ENCODE measurements at regions of chr2 and their contacts with region 1.

Region 1: DNA sequence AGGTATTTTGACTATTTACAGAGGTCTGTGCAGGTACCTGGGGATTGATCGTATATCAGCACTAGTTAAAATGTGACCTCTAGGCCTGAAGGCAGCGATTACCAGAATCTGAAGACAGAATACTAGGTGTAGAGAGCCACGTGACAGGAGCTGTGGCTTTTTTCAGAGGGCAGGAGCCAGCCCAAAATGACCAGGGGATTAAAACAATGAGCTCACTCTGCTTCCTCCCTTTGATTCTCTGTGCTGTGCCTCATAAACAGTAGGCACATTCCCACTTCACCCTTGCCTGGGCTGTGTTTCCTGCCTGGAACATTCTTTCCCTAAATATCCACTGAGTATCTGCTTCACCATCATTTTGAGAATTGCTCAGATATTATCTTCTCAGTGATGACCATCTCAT is 15.2 kb downstream of the ITGAV start:
- DNase-seq: no peak
- H3K4me3 ChIP-seq: no peak overlapping the region
- H3K4me3 Mint-ChIP-seq: no peak overlapping the region
- H3K27ac ChIP-seq: no peak overlapping the region
- H3K27ac Mint-ChIP-seq: no peak overlapping the region
- H3K4me1 ChIP-seq: no peaks in the 10 kb centered on the region
- H3K4me1 Mint-ChIP-seq: no peaks in the 10 kb centered on the region
- H3K27me3 ChIP-seq: no peaks in the 10 kb centered on the region
- H3K27me3 Mint-ChIP-seq: no peaks in the 10 kb centered on the region
- CTCF ChIP-seq: no peak

Region 2: DNA sequence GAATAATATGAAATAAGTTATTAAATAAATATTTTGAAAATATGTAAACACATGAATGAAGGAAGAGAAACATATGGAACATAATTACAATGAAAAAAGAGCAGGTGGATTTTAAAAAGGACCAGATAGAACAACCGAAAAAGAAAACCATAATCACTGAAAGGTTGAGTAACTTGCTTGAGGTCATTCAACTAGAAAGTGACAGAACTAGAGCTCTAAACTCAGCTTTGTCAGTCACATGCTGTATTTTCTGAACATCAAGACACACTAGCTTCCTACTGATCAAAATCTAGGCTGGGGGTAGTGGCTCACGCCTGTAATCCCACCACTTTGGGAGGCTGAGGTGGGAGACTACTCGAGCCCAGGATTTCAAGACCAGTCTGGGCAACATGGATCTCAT is 45.2 kb before region 1 on chr2:
- intact Hi-C with region 1: loop called in 1 of 2 experiments (anchors 10 kb)
- DNase-seq: no peak
- H3K4me3 ChIP-seq: no peak overlapping the region
- H3K4me3 Mint-ChIP-seq: no peak overlapping the region
- H3K27ac ChIP-seq: no peak overlapping the region
- H3K27ac Mint-ChIP-seq: no peak overlapping the region
- H3K4me1 ChIP-seq: no peaks in the 10 kb centered on the region
- H3K4me1 Mint-ChIP-seq: no peaks in the 10 kb centered on the region
- H3K27me3 ChIP-seq: no peaks in the 10 kb centered on the region
- H3K27me3 Mint-ChIP-seq: peaks cover 0 to 3% (median 0%) of the 10 kb centered on the region in 3 donors
- CTCF ChIP-seq: no peak

Region 3: GRCh38 chr2:186570587-186570986 is 34.5 kb before region 1 on chr2:
- intact Hi-C with region 1: no loop called
- DNase-seq: no peak
- H3K4me3 ChIP-seq: no peak overlapping the region
- H3K4me3 Mint-ChIP-seq: no peak overlapping the region
- H3K27ac ChIP-seq: no peak overlapping the region
- H3K27ac Mint-ChIP-seq: no peak overlapping the region
- H3K4me1 ChIP-seq: no peaks in the 10 kb centered on the region
- H3K4me1 Mint-ChIP-seq: peaks cover 6% of the 10 kb centered on the region
- H3K27me3 ChIP-seq: no peaks in the 10 kb centered on the region
- H3K27me3 Mint-ChIP-seq: no peaks in the 10 kb centered on the region
- CTCF ChIP-seq: no peak

Region 4: DNA sequence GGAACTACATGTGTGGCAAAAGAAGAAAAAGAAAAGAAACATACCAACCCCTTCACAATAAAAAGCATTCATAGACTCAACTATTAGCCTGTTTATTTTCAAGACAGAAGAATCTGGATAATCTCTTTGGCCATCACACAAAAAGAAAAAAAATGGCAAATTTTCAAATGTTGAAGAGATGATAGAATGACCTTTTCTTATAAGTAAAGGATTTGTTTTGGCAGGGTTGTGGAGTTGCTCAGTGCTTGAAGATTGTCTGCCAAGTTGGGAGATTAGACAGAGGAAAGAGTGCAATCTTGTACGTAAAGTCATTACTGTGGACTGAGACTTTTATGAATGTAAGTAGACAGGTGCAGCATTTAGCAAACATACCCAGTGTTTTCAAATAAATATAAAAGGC is 70.3 kb after region 1 on chr2:
- intact Hi-C with region 1: no loop called
- DNase-seq: no peak
- H3K4me3 ChIP-seq: no peak overlapping the region
- H3K4me3 Mint-ChIP-seq: no peak overlapping the region
- H3K27ac ChIP-seq: no peak overlapping the region
- H3K27ac Mint-ChIP-seq: no peak overlapping the region
- H3K4me1 ChIP-seq: no peaks in the 10 kb centered on the region
- H3K4me1 Mint-ChIP-seq: no peaks in the 10 kb centered on the region
- H3K27me3 ChIP-seq: no peaks in the 10 kb centered on the region
- H3K27me3 Mint-ChIP-seq: no peaks in the 10 kb centered on the region
- CTCF ChIP-seq: no peak

Measured in CD14-positive monocyte (primary cell).